PC-3 (cell line): ENCODE measurements at regions of chr3 and their contacts with region 1.

Region 1: GRCh38 chr3:149273096-149273751 is 51.6 kb upstream of the CP start:
- DNase-seq: peak; percentile 94
- ATAC-seq: peak; percentile 29
- H3K4me3 ChIP-seq: no peak overlapping the region
- H3K27ac ChIP-seq: no peak overlapping the region
- H3K4me1 ChIP-seq: peaks cover 35% of the 10 kb centered on the region
- H3K27me3 ChIP-seq: no peaks in the 10 kb centered on the region
- CTCF ChIP-seq: peak; percentile 100

Region 2: DNA sequence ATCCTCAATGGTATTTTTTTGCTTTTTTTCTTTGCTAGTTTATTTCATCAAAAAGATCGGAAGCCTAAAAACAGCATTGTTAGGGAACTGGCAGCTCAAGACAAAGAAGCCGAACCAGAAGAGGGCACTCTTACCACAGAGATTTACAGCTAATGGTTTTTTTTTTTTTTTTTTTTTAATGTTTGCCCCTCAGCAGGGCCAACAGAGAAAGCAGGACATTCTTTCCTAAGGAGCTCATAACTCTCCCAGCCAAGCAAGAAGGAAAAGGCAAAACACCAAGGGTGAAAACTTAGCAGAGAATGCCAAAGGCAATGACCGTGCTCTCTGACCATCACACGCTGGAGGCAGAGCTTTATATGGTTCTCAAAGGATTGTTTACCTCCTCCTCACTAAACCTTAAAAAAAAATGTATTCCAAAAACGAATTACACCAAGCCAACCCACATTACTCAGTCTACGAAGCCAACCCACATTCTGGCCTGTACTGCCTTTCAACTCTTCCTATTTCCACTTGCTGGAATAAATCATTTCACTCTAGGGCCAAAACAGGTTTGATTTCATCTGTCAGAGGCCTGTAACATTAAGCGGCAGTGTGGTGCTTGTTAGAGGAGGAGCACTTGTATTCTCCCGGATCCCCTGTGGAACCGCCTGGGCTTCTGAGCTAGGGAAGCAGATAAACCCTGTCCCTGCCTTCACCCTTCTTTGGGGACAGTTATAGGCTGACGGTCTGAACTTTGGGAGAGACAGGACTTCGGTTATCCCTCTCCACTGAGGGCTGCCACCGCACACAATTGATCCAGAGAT is 317.5 kb before region 1 on chr3:
- CTCF ChIA-PET with region 1: interaction called, 20 read pairs
- POLR2A ChIA-PET with region 1: no interaction called
- intact Hi-C with region 1: loop called (anchors 1 kb)
- DNase-seq: peak; percentile 68
- ATAC-seq: peak; percentile 53
- H3K4me3 ChIP-seq: peak overlapping the region; percentile 29; the same call in 1 of the 2 replicates
- H3K27ac ChIP-seq: no peak overlapping the region
- H3K4me1 ChIP-seq: peaks cover 17% of the 10 kb centered on the region
- H3K27me3 ChIP-seq: no peaks in the 10 kb centered on the region
- CTCF ChIP-seq: peak; percentile 87

Region 3: DNA sequence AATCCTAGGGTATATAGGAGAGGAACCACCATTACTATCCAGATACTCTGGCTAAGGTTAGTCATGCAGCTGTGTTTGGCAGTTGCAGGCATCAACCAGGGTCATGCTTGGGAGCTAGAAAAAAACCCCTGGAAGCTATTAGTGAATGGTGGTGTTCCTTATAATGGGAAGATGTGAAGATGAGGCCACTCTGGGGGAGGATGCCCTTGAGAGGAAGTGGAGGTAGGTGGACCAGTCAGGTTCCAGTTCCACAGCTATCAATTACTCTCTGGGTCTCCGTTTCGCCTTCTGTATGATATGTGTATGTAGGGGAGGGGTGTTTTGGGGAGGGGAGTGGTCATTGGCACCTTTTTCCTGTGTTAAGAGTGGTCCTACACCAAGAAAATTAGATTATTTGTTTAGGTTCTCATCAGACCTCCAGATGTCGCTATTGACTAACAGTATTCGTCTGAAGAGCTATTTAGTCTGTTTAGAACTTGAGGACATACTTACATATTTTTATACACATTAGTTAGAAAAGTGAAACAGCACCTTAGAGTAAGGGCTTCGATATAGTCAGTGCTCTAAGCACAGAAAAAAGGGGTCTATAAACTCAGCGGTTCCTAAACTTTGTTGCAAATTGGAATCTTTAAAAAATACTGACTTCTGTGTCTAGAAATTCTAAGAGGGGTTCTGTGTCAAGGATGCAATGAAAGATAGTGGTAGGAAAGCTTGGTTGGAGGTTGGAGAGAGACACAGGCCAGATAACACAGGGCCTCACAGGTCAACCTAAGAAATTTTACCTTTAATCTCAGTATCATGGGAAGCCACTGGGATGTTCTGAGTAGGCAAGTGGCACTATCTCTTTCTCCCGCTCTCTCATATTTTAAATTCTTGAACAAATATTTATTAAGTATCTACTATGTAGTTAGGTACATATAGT is 152.9 kb before region 1 on chr3:
- CTCF ChIA-PET with region 1: interaction called, 5 read pairs
- POLR2A ChIA-PET with region 1: no interaction called
- intact Hi-C with region 1: loop called (anchors 1 kb)
- DNase-seq: peak; percentile 86
- ATAC-seq: peak; percentile 82
- H3K4me3 ChIP-seq: no peak overlapping the region
- H3K27ac ChIP-seq: no peak overlapping the region
- H3K4me1 ChIP-seq: 0 out of 2 replicates have a peak, but pooled peaks cover 4% of the 10 kb centered on the region
- H3K27me3 ChIP-seq: no peaks in the 10 kb centered on the region
- CTCF ChIP-seq: peak; percentile 83

Region 4: GRCh38 chr3:149180057-149180573 is 93.1 kb before region 1 on chr3:
- CTCF ChIA-PET with region 1: no interaction called
- POLR2A ChIA-PET with region 1: no interaction called
- intact Hi-C with region 1: loop called (anchors 1 kb)
- DNase-seq: peak; percentile 99
- ATAC-seq: peak; percentile 97
- H3K4me3 ChIP-seq: no peak overlapping the region
- H3K27ac ChIP-seq: peak overlapping the region; percentile 84
- H3K4me1 ChIP-seq: peaks cover 26% of the 10 kb centered on the region
- H3K27me3 ChIP-seq: no peaks in the 10 kb centered on the region
- CTCF ChIP-seq: no peak

Region 5: DNA sequence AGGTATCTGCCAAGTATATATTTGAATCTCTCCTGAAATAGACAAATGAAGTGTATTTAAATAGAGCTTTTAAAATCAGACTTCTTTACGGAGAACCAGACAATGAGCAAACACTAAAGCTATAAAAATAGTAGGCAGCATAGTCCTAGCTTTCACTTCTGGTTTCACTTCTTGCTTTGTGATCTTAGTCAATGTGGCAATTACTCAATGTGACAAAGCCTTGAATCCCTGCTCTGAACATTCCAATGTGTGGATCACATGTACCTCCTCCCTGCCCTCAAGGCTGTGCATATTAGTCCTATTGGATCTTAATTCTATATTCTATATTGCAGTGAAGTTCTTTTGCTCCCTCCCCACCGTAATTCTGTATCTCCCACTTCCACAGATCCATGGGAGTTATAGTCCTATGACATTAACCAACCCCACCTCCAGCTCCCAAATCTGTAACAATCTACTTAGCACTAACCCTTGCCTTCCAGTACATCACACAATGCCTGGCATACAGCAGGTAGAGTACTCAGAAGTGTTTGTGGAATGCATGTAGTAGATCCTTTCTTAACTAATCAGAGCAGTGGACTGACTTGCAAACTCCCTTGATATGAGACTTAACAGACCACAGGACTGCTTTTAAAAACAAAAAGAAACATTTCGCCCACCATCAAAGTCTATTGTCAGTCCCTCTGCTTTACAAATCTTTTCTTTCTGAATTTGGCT is 27.3 kb before region 1 on chr3:
- CTCF ChIA-PET with region 1: no interaction called
- POLR2A ChIA-PET with region 1: no interaction called
- intact Hi-C with region 1: loop called (anchors 1 kb)
- DNase-seq: peak; percentile 86
- ATAC-seq: peak; percentile 66
- H3K4me3 ChIP-seq: peak overlapping the region; percentile 42
- H3K27ac ChIP-seq: peak overlapping the region; percentile 95
- H3K4me1 ChIP-seq: peaks cover 40% of the 10 kb centered on the region
- H3K27me3 ChIP-seq: no peaks in the 10 kb centered on the region
- CTCF ChIP-seq: no peak

Region 6: DNA sequence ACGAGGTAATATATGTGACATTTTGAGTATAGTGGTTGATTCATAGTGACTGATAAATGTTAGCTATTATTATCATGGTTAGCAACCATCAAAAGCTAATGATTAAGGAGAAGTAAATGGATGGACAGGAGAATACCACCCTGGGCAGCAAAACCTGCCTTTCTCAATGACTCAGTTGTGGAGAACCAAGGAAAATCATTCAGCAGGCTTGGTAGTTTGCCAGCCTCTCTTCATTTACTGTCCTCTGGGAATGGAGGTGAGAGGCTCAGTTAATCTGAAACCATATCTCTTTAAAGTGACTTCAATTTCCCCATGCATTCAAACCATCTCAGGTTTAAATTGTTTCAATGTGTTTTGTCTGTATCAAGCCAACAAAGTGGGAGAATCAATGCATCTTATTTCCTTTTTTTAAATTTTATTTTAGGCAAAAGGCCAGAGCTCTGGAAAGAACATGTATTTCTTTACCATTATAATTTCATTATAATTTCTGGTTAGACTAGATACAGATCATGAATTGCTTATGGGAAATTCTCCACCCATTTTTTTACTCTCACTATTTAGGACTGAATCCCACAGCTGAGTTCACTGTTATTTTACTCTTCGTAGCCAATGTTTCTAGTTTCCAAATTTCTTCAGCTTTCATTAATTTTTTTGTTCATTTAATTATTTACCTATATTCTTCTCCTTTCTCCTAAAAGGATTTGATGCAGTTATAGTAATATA is 57.5 kb after region 1 on chr3:
- CTCF ChIA-PET with region 1: interaction called, 3 read pairs
- POLR2A ChIA-PET with region 1: interaction called, 12 read pairs
- intact Hi-C with region 1: loop called (anchors 1 kb)
- DNase-seq: peak; percentile 79
- ATAC-seq: peak; percentile 36; the same call in 1 of the 2 replicates
- H3K4me3 ChIP-seq: no peak overlapping the region
- H3K27ac ChIP-seq: peak overlapping the region; percentile 6; the same call in 1 of the 2 replicates
- H3K4me1 ChIP-seq: peaks cover 41% of the 10 kb centered on the region
- H3K27me3 ChIP-seq: no peaks in the 10 kb centered on the region
- CTCF ChIP-seq: no peak

Region 7: GRCh38 chr3:149393345-149394160 is 120.3 kb after region 1 on chr3:
- CTCF ChIA-PET with region 1: interaction called, 4 read pairs
- POLR2A ChIA-PET with region 1: no interaction called
- intact Hi-C with region 1: loop called (anchors 5 kb)
- DNase-seq: peak; percentile 84
- ATAC-seq: peak; percentile 16; the same call in 1 of the 2 replicates
- H3K4me3 ChIP-seq: no peak overlapping the region
- H3K27ac ChIP-seq: peak overlapping the region; percentile 96
- H3K4me1 ChIP-seq: peaks cover 81% of the 10 kb centered on the region
- H3K27me3 ChIP-seq: no peaks in the 10 kb centered on the region
- CTCF ChIP-seq: peak; percentile 99

Region 8: DNA sequence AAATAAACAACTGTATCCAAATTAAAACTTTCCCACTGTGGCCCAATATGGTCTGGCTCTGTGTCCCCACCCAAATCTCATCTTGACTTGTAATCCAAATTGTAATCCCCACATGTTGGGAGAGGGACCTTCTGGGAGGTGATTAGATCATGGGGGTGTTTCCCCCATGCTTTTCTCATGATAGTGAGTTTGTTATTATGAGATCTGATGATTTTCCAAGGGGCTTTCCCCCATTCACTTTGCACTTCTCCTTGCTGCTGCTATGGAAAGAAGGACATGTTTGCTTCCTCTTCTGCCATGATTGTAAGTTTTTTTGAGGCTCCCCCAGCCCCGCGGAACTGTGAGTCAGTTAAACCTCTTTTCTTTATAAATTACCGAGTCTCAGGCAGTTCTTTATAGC is 1577.0 kb after region 1 on chr3:
- CTCF ChIA-PET with region 1: no interaction called
- POLR2A ChIA-PET with region 1: no interaction called
- intact Hi-C with region 1: no loop called
- DNase-seq: no peak
- ATAC-seq: no peak
- H3K4me3 ChIP-seq: no peak overlapping the region
- H3K27ac ChIP-seq: no peak overlapping the region
- H3K4me1 ChIP-seq: no peaks in the 10 kb centered on the region
- H3K27me3 ChIP-seq: no peaks in the 10 kb centered on the region
- CTCF ChIP-seq: no peak